A549 (cell line): ENCODE measurements at regions of chr11 and their contacts with region 1.

Region 1: GRCh38 chr11:57249384-57250319 is 12.6 kb upstream of the APLNR start:
- DNase-seq: peak; percentile 31 to 68
- ATAC-seq: peak; percentile 70 to 81
- H3K4me3 ChIP-seq: no peak overlapping the region
- H3K27ac ChIP-seq: peak overlapping the region; percentile 89 to 90
- H3K4me1 ChIP-seq: peaks cover 11% of the 10 kb centered on the region
- CTCF ChIP-seq: peak; percentile 97
- EP300 ChIP-seq: no peak
- POLR2A ChIP-seq: no peak
- RAD21 ChIP-seq: peak; percentile 93 to 95

Region 2: DNA sequence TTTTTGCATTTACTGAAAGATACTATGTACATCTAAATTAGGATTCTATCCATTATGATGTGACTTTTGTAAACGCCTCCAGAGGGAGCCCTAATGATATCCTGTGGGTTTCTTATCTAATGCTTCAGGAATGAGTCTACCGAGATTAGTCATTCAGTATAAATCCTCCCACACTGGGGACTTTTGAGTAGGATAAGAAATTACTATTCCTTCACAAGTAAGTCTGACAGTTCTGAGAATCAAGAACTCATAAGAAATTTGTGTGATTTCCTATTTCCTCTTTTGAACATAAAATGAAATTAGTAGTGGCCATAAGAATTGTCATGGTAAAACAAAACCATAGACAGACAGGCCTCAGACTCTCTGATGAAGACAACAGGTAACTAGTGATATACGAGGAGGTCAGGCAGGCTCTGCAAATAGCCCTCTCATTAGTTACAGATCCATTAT is 625.0 kb before region 1 on chr11:
- CTCF ChIA-PET with region 1: interaction called, 54 read pairs
- POLR2A ChIA-PET with region 1: interaction called, 10 read pairs
- DNase-seq: peak; percentile 62 to 77
- ATAC-seq: peak; percentile 95 to 98
- H3K4me3 ChIP-seq: no peak overlapping the region
- H3K27ac ChIP-seq: no peak overlapping the region
- H3K4me1 ChIP-seq: peaks cover 3% of the 10 kb centered on the region; the same call in 1 of the 3 replicates
- CTCF ChIP-seq: peak; percentile 70
- EP300 ChIP-seq: no peak
- POLR2A ChIP-seq: no peak
- RAD21 ChIP-seq: peak; percentile 69 to 72

Region 3: DNA sequence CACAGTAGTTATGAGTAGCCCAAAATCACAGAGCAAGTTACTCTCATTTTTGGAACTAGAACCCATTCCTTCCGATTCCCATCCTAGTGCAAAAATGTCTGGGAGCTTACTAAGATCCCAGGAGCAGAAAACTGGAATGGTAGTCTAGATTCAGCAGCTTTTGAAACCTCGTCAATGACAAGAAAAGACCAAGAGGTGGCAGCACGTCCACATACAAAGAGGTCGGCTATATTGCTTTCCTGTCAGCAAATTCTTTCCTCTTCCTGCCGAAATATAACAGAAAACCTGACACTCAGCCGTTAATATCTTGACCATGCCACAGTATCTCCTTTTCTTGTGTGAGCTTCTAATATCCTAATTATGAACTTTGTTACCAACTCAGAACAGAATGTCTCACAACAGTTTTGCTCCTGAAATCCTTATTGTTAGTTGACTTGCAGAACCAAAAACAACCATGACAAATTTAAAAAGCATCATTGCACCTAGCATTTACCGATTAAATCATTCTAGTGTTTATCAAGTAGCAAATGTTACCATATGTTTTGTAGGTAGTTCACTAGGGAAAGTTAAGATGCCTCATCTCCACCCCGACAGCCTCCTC is 408.3 kb before region 1 on chr11:
- CTCF ChIA-PET with region 1: interaction called, 596 read pairs
- POLR2A ChIA-PET with region 1: interaction called, 25 read pairs
- DNase-seq: peak; percentile 35 to 86
- ATAC-seq: peak; percentile 66 to 93; a peak in 5 of 6 replicates
- H3K4me3 ChIP-seq: no peak overlapping the region
- H3K27ac ChIP-seq: peak overlapping the region; percentile 88 to 94
- H3K4me1 ChIP-seq: peaks cover 14% of the 10 kb centered on the region
- CTCF ChIP-seq: peak; percentile 89
- EP300 ChIP-seq: no peak
- POLR2A ChIP-seq: no peak
- RAD21 ChIP-seq: peak; percentile 98 to 99

Region 4: GRCh38 chr11:56917708-56918400 is 331.8 kb before region 1 on chr11:
- CTCF ChIA-PET with region 1: interaction called, 18 read pairs
- POLR2A ChIA-PET with region 1: no interaction called
- DNase-seq: no peak
- ATAC-seq: no peak
- H3K4me3 ChIP-seq: no peak overlapping the region
- H3K27ac ChIP-seq: peak overlapping the region; percentile 52 to 68; a peak in 5 of 6 replicates
- H3K4me1 ChIP-seq: peaks cover 7% of the 10 kb centered on the region; the same call in 2 of the 3 replicates
- CTCF ChIP-seq: no peak
- EP300 ChIP-seq: no peak
- POLR2A ChIP-seq: no peak
- RAD21 ChIP-seq: no peak

Region 5: GRCh38 chr11:57124917-57125316 is 124.7 kb before region 1 on chr11:
- CTCF ChIA-PET with region 1: interaction called, 44 read pairs
- POLR2A ChIA-PET with region 1: no interaction called
- DNase-seq: no peak
- ATAC-seq: no peak
- H3K4me3 ChIP-seq: no peak overlapping the region
- H3K27ac ChIP-seq: peak overlapping the region in 1 of 2 experiments; percentile 42; a peak in 1 of 6 replicates
- H3K4me1 ChIP-seq: peaks cover 11% of the 10 kb centered on the region
- CTCF ChIP-seq: no peak
- EP300 ChIP-seq: no peak
- POLR2A ChIP-seq: no peak
- RAD21 ChIP-seq: no peak

Region 6: DNA sequence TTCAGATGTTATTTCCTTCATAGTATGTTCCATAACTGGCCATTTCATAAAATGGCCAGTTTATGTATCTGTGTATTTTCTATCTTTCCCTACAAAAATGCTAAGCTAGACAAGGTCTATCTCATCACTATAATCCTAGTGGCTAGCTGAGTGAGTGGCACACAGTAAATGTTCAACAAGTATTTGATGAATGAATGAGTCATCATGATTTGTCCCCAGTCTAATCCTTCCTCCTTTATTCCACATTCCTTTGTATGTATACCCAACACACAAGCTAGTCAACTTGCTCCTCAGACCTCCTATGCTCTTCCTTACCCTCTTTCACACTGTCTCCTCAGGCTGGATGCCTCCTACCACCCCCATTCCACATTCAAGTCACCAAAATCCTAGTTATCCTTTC is 25.1 kb before region 1 on chr11:
- CTCF ChIA-PET with region 1: interaction called, 23 read pairs
- POLR2A ChIA-PET with region 1: no interaction called
- DNase-seq: peak; percentile 26 to 55
- ATAC-seq: peak; percentile 69 to 92; a peak in 4 of 6 replicates
- H3K4me3 ChIP-seq: no peak overlapping the region
- H3K27ac ChIP-seq: peak overlapping the region; percentile 46 to 65
- H3K4me1 ChIP-seq: peaks cover 13% of the 10 kb centered on the region
- CTCF ChIP-seq: no peak
- EP300 ChIP-seq: no peak
- POLR2A ChIP-seq: no peak
- RAD21 ChIP-seq: no peak

Region 7: DNA sequence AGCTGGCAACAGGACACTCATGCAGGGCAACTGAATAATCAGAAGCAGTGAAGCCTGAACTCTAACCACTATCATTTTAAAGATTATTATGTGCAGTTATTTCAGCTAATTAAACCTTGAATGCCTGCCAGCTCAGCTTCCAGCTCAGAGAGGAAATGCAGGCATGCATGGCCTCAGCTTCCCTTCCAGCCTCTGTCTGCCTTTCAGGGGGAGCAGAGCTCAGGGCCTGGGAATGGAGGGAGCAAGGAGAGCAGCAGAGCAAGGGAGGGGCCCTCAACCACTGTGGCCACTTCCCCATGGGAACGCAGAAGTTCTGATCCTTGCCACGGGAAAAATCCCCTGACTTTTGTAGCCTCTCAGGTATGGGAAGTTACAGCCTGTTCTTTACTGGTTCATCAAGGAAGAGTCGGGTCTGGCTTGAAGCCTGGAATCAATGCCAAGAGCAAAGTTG is 19.9 kb after region 1 on chr11:
- CTCF ChIA-PET with region 1: interaction called, 90 read pairs
- POLR2A ChIA-PET with region 1: no interaction called
- DNase-seq: no peak
- ATAC-seq: no peak
- H3K4me3 ChIP-seq: no peak overlapping the region
- H3K27ac ChIP-seq: no peak overlapping the region
- H3K4me1 ChIP-seq: no peaks in the 10 kb centered on the region
- CTCF ChIP-seq: no peak
- EP300 ChIP-seq: no peak
- POLR2A ChIP-seq: no peak
- RAD21 ChIP-seq: no peak

Region 8: DNA sequence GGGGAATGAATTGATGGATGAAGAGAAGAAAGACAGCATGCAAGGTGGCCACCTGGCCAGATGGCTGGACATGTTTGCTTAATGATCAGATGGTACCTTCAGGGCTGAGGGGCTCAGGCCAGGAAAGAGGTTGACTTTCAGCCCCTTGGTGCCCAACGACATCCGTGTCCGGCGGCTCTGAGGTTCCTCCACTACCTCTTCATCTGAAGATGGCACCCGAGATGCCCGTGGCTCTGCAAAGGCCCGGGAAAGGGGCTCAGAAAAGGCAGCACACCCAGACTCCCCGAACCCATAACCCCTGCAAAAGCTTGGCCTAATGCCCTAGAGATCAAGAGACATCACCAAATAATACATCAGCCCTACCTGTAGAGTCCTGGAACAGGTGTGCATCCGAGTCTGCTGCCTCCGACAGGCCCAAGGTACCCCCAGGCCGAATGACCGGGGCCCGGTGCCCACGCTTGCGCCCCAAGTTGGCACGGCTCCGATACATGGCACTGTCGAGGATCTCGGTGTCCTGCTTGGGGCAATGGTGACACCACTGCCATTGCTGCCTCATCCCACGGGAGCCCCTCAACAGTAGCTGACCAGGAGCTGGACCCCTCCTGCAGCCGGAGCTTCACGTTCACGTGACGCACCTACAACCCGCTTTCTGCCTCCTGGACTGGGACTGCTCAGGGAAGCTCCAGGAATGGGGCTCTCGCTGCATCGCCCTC is 52.2 kb after region 1 on chr11:
- CTCF ChIA-PET with region 1: no interaction called
- POLR2A ChIA-PET with region 1: no interaction called
- DNase-seq: no peak
- ATAC-seq: no peak
- H3K4me3 ChIP-seq: no peak overlapping the region
- H3K27ac ChIP-seq: no peak overlapping the region
- H3K4me1 ChIP-seq: peaks cover 11% of the 10 kb centered on the region
- CTCF ChIP-seq: no peak
- EP300 ChIP-seq: no peak
- POLR2A ChIP-seq: no peak
- RAD21 ChIP-seq: no peak

Region 9: GRCh38 chr11:57335343-57336110 is 85.9 kb after region 1 on chr11 and contains the start of gene SSRP1:
- CTCF ChIA-PET with region 1: no interaction called
- POLR2A ChIA-PET with region 1: no interaction called
- DNase-seq: peak; percentile 91 to 92
- ATAC-seq: peak; percentile 94 to 99
- H3K4me3 ChIP-seq: peak within 1 kb of the TSS; percentile 81
- H3K27ac ChIP-seq: peak within 1 kb of the TSS; percentile 95 to 99
- H3K4me1 ChIP-seq: peaks cover 18% of the 10 kb centered on the region
- CTCF ChIP-seq: no peak; the same call in 2 of the 3 replicates
- EP300 ChIP-seq: no peak
- POLR2A ChIP-seq: peak; percentile 56
- RAD21 ChIP-seq: no peak
- polyA plus RNA-seq, gene SSRP1: 282 and 288 TPM in 2 replicates